BJ (cell line): ENCODE measurements at regions of chr7 and their contacts with region 1.

Region 1: GRCh38 chr7:45923290-45923689 is 2.2 kb upstream of the IGFBP3 start:
- DNase-seq: no peak
- H3K4me3 ChIP-seq: no peak overlapping the region
- H3K27me3 ChIP-seq: no peaks in the 10 kb centered on the region
- CTCF ChIP-seq: peak; percentile 97

Region 2: DNA sequence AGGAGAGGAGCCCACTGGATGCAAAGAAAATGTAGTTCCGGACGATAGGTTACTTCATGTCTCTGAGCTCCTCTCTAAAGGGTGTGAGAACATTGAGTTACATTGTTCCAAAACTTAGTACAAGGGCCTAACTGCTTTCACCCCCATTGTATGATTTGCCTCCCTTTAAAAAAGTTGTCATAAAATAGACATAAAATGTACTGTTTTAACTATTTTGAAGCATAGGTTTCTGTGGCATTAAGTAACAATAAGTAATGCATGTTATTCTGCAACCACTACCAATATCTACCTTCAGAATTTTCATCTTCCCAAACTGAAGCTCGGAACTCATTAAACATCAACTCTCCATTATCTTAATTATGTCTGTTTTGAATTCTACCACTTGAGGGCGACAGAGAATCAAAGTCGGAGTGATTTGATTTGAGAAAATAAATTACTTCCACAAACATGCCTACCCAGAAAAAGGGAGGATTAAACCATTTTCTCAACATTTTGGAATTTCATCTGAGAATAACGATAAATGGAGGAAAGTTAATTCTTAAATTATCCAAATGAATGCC is 32.3 kb before region 1 on chr7:
- CTCF ChIA-PET with region 1: interaction called, 46 read pairs
- POLR2A ChIA-PET with region 1: no interaction called
- DNase-seq: no peak
- H3K4me3 ChIP-seq: no peak overlapping the region
- H3K27me3 ChIP-seq: peaks cover 3% of the 10 kb centered on the region
- CTCF ChIP-seq: peak; percentile 53

Region 3: DNA sequence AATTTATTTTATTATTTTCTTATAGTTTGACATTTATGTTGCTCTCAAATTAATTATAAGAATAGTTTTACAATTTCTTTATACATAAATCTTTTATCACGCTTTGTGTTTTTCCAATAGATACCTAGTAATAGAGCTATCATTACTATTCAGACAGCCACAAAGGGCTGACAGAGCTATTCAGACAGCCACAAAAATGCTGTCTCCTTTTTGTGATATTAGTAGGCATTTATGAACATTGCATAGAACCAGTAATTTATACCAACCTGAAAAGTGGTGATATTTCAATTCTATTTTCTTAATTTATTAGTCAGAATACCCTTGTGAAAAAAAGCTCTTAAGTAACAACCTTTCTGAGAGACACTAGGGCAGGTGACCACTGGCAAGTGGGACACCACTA is 32.0 kb after region 1 on chr7:
- CTCF ChIA-PET with region 1: no interaction called
- POLR2A ChIA-PET with region 1: no interaction called
- DNase-seq: no peak
- H3K4me3 ChIP-seq: no peak overlapping the region
- H3K27me3 ChIP-seq: no peaks in the 10 kb centered on the region
- CTCF ChIP-seq: no peak

Region 4: DNA sequence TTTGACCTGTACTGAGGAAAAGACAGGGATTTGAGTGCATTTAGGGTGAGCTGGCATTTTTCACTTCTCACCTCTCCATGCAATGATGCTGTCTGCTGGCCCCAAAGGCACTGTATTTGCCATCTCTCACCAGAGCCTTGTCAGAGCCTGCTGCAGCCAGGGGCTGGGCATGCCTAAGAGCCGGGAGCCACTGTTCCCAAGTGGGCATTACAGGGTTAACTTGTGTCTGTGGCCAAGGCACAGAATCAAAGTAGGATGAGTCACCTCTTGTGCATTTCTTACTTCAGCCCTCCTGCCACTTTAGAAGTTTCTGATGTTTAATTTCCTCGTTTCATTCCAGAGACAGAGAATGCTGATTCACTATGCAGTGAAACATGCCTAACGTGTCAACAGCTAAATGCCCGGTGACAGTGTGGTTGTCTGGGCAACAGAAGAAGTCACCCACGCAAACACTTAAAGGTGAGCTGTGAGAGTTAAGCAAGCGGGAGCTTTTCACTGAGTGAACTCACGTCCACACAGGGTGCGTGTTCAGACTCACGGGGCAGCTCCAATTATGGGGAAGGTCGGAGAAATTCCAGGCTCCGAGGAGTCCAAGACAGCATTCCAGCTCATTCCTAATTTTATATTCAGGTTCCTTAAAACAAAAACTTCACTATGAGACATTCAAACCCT is 54.9 kb after region 1 on chr7:
- CTCF ChIA-PET with region 1: interaction called, 15 read pairs
- POLR2A ChIA-PET with region 1: no interaction called
- DNase-seq: peak; percentile 99
- H3K4me3 ChIP-seq: no peak overlapping the region
- H3K27me3 ChIP-seq: no peaks in the 10 kb centered on the region
- CTCF ChIP-seq: no peak

Region 5: GRCh38 chr7:46131916-46132795 is 208.9 kb after region 1 on chr7:
- CTCF ChIA-PET with region 1: interaction called, 19 read pairs
- POLR2A ChIA-PET with region 1: no interaction called
- DNase-seq: no peak
- H3K4me3 ChIP-seq: no peak overlapping the region
- H3K27me3 ChIP-seq: no peaks in the 10 kb centered on the region
- CTCF ChIP-seq: peak; percentile 44

Region 6: GRCh38 chr7:46315891-46316290 is 392.6 kb after region 1 on chr7:
- CTCF ChIA-PET with region 1: interaction called, 13 read pairs
- POLR2A ChIA-PET with region 1: no interaction called
- DNase-seq: peak; percentile 58
- H3K4me3 ChIP-seq: no peak overlapping the region
- H3K27me3 ChIP-seq: no peaks in the 10 kb centered on the region
- CTCF ChIP-seq: no peak

Region 7: GRCh38 chr7:46369933-46370654 is 446.8 kb after region 1 on chr7:
- CTCF ChIA-PET with region 1: interaction called, 10 read pairs
- POLR2A ChIA-PET with region 1: no interaction called
- DNase-seq: peak; percentile 67
- H3K4me3 ChIP-seq: no peak overlapping the region
- H3K27me3 ChIP-seq: no peaks in the 10 kb centered on the region
- CTCF ChIP-seq: 0 out of 2 replicates have a peak, but pooled peaks have one; percentile 2

Region 8: DNA sequence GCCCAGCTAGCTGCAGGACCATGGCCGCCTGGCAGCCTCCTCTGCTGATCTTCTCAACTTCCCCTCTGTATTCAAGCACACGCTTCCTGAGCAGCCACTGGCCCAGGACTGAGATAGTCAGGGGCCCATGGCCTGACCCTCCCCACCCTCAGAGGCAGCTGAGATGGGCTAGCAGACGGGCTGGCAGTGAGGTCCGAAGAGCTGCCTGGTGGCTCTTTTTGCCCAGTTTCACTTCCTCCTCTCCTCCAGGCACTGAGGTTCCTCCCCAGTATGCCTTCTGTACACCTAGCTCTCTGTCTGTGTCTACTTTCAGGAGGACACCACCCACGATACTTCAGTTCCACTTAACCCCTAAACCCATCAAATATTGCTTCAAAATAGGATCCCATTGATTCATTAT is 1263.0 kb after region 1 on chr7:
- CTCF ChIA-PET with region 1: interaction called, 88 read pairs
- POLR2A ChIA-PET with region 1: no interaction called
- DNase-seq: no peak
- H3K4me3 ChIP-seq: no peak overlapping the region
- H3K27me3 ChIP-seq: peaks cover 19% of the 10 kb centered on the region
- CTCF ChIP-seq: no peak